Activated B cell treated with CpG ODN at 0.5 μM for 24 hours (primary cell): ENCODE measurements at regions of chr12 and their contacts with region 1.

Region 1: DNA sequence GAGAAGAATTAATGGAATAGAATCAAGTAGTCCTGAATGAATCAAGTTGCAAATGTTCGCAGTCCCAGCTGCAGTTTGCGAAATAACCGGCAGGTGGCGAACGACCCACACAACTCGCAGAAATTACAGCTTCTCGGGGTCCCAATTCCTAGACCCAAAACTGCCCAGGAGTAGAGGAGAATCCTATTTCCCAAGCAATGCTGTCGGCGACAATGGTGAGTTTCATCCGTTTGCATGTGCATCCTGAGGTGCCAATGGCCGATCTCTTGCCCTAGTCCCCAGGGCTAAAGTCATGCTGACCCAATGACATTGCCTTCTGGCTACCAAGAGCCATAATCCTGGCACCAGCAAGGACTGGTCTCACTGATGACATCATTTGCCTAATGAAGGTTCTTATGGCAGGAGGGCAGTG is 8.5 kb upstream of the ASCL1 start:
- DNase-seq: peak; percentile 51
- ATAC-seq: peak; percentile 25
- H3K4me3 Mint-ChIP-seq: no peak overlapping the region
- H3K27ac Mint-ChIP-seq: no peak overlapping the region
- H3K4me1 Mint-ChIP-seq: peaks cover 13% of the 10 kb centered on the region
- H3K27me3 Mint-ChIP-seq: peaks cover 54% of the 10 kb centered on the region
- CTCF ChIP-seq: peak; percentile 100

Region 2: DNA sequence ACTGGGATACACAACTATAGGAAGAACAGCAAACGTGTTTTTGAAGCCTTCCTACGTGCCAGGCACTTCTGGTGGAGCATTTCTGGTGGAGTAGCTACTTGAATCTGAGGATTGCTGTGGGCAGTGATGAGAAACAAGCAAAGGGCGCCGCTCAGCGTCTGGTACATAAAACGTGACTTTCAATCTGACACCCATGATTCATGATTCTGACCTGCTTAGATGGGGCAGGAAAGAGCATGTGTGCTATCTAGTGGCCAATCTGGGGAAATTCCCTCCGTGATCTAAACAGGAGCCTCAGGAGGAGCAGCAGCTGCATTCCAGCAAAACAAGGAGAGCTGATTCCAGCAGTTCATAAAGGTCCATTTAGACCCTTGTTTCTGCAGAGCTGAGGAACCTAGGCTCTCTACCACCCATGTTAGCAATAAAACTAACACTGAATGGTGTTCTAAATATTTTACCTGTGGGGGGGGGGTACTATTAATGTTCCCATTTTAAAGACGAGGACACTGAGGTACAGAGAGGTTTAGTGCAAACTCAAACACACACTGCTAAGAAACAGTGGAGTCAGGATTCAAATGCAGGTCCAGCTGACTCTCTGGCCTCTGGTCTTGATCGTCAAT is 69.7 kb before region 1 on chr12:
- CTCF ChIA-PET with region 1: interaction called, 18 read pairs
- POLR2A ChIA-PET with region 1: no interaction called
- intact Hi-C with region 1: loop called (anchors 1 kb)
- DNase-seq: no peak
- ATAC-seq: peak; percentile 60
- H3K4me3 Mint-ChIP-seq: no peak overlapping the region
- H3K27ac Mint-ChIP-seq: no peak overlapping the region
- H3K4me1 Mint-ChIP-seq: peaks cover 3% of the 10 kb centered on the region
- H3K27me3 Mint-ChIP-seq: peaks cover 18% of the 10 kb centered on the region
- CTCF ChIP-seq: no peak

Region 3: DNA sequence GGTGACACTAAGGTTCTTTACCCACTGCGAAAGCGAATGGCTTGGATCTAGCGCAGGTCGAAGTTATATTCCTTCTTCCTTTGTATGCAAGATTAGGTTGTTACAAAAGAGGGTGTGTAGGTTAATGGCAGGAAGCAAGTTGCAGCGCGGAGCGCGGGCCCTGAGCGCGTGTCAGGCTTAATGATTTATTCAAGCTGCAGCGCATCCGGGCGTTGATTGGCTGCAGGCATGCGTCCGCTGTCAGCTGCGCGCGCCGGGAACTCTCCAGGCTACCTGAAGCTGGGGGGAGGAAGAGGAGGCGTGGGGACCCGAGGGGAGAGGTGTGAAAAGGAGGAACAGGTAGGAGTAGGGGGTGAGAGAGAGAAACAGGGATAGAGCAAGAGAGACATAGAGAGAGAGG is 15.9 kb after region 1 on chr12:
- CTCF ChIA-PET with region 1: interaction called, 3 read pairs
- POLR2A ChIA-PET with region 1: no interaction called
- intact Hi-C with region 1: loop called (anchors 1 kb)
- DNase-seq: no peak
- ATAC-seq: peak; percentile 31
- H3K4me3 Mint-ChIP-seq: peak overlapping the region; percentile 70
- H3K27ac Mint-ChIP-seq: no peak overlapping the region
- H3K4me1 Mint-ChIP-seq: peaks cover 17% of the 10 kb centered on the region
- H3K27me3 Mint-ChIP-seq: peaks cover 76% of the 10 kb centered on the region
- CTCF ChIP-seq: no peak

Region 4: DNA sequence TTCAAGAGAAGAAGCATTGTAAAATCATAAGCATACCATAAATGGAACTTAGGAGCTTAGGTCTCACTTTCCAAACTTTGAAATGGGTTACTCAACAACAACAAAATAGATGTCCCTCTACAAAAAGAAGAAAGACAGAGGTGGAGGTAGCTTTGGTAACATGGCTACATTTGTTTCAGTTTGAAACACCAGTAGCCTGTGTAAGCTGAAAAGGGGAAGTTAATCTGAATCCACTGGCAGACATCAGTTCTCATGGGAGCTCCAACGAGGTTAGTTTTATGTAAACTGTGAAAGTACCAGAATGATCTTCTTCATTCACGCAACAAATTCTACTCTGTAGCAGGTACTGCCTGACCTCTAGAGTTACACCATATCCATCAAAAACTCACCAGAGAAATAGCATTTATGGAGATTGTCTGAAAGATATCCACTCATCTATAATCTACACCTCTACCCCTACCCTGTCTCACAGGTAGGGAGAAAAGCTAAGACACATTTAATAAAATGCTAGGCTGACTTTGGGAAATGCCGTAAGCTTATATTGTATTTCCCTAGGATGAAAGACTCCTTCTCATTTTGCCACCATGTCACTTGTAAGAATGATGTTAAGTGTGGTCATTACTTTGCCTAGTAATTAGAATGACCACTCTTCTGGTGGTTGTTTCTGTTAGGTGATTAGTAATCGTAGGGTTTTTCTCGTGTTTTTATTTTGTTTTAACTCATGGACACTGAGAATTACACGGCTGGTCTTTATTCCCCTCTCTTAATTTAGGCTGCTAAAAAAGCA is 232.6 kb after region 1 on chr12:
- CTCF ChIA-PET with region 1: interaction called, 6 read pairs
- POLR2A ChIA-PET with region 1: no interaction called
- intact Hi-C with region 1: loop called (anchors 2 kb)
- DNase-seq: no peak
- ATAC-seq: peak; percentile 93
- H3K4me3 Mint-ChIP-seq: no peak overlapping the region
- H3K27ac Mint-ChIP-seq: no peak overlapping the region
- H3K4me1 Mint-ChIP-seq: peaks cover 10% of the 10 kb centered on the region
- H3K27me3 Mint-ChIP-seq: no peaks in the 10 kb centered on the region
- CTCF ChIP-seq: no peak